Right ventricle myocardium inferior (tissue), 1 donor: ENCODE measurements at regions of chr7 and their contacts with region 1.

Region 1: DNA sequence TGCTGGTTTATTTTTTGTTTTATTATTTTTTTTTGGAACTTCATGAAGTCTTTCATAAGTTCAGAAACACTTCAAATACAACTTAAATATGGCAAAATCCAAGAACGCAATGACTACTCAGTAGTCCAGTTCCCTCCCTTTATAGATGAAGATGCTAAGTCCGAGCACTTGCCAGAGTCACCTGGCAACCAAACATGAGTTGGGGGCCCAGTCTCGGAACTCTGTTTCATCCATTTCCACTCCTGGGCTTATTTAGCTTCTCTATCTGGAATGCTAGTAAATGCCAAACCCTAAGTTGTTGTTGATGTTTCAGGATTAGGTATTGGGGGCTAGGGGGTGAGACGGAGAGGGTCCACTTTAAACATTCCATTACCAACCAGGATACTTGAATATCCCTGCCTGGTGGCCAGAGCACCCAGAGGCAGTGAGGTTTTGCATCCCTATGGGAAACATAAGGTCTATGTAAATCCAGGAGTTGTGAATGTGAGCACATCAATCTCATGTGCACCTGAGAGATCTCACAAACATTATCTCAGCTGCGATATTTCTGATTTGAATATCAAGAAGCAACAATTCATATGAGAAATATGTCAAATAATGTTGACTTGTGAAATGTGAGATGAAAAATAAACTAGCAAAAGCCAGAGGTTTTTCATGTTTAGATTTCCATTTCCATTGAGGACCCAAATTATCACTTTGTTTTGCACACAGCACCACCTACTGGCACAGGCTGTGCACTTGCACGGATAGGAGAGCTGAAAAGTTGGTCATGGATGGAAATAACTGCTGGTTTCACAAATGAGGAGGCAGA is 129.3 kb downstream of the PKD1L1 start:
- DNase-seq: no peak
- ATAC-seq: peak; percentile 73

Region 2: DNA sequence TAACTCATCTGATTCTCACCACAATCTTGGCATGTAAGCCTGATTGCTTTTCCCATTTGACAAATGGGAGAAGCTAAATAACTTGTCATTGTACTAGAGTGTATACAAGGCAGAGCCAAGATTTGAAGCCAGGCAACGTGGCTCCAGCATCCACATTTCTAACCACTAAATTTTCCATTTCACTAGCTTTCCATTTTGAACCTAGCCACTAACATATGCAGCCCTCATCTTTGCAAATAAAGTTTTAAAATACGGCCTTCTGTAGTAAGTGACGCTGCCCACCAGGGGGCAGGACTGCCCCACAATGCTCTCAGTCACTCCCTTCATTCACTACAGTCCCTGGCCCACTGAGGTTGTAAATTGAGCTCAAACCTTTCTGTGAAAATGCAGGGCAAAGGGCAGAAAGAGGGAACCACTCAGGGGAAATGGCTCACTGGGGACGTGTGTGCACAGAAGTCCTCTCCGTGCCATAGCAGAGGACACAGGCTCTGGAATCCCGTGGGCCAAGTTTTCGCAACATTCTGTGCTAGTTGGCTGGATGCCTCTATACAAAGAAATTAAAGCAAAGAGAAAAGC is 552.8 kb before region 1 on chr7:
- intact Hi-C with region 1: loop called (anchors 2 kb)
- DNase-seq: no peak
- ATAC-seq: peak; percentile 85

Region 3: DNA sequence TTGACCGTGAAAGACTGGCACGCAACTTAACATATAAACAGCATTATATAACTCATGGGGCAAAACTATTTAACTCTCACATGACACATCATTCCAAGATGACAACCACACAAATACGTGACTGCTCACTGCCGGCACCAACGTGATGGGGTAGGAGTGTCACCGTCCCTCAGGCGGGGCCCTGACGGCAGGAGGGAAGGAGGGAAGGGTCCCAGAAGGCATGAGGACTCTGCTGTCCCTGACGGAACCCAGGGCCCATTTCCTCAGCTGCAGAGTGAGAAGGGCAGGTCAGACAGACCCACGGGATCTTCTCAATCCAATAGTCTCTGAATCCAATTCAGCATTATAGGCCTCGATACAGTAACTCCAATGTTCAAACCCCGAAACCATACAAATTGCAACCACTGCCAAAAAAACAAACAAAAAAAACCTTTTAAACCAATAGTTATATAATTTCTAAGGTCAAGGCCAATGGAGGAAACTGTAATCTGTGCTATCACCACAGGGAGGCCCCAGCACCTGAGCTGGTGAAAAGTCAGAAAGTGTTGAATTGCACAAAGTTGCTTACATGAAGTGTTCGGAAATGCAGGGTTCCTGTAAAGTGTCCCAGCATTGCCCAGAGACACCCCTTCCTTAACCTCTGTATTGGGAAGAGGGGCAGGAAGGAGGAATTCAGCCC is 374.5 kb before region 1 on chr7:
- intact Hi-C with region 1: loop called (anchors 2 kb)
- DNase-seq: no peak
- ATAC-seq: peak; percentile 27

Region 4: GRCh38 chr7:47571331-47572093 is 247.5 kb before region 1 on chr7:
- intact Hi-C with region 1: loop called (anchors 10 kb)
- DNase-seq: peak; percentile 92
- ATAC-seq: peak; percentile 73

Region 5: DNA sequence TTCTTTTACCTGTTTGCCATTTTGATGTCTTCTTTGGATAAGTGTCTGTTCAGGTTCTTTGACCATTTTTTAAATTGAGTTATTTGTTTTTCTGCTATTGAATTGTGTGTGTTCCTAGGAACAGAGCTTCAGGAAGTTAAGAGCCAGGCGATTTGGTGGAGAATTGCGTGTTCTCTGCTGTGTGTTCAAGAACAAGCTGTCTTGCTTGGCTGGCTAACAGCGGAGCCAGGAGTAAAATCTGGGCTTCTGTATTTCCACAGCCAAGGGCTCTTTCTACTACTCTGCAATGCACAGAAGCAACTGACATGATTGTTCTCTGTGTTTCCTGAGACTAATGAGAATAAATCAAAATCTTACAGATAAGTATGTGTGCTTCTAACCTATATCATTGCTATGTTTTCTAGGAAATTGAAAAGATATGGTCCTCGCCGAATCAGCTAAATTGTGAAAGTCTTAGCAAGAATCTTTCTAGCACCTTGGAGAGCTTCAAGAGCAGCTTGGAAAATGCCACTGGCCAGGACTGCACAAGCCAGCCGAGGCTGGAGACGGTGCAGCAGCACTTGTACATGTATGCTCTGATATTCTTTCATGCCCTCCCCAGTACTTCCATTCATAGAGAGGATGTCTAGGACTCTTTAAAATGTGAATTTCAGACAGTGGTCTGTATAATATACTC is 476.4 kb after region 1 on chr7:
- intact Hi-C with region 1: no loop called
- DNase-seq: no peak
- ATAC-seq: no peak